Natural killer cell (primary cell): ENCODE measurements at regions of chr1 and their contacts with region 1.

Region 1: DNA sequence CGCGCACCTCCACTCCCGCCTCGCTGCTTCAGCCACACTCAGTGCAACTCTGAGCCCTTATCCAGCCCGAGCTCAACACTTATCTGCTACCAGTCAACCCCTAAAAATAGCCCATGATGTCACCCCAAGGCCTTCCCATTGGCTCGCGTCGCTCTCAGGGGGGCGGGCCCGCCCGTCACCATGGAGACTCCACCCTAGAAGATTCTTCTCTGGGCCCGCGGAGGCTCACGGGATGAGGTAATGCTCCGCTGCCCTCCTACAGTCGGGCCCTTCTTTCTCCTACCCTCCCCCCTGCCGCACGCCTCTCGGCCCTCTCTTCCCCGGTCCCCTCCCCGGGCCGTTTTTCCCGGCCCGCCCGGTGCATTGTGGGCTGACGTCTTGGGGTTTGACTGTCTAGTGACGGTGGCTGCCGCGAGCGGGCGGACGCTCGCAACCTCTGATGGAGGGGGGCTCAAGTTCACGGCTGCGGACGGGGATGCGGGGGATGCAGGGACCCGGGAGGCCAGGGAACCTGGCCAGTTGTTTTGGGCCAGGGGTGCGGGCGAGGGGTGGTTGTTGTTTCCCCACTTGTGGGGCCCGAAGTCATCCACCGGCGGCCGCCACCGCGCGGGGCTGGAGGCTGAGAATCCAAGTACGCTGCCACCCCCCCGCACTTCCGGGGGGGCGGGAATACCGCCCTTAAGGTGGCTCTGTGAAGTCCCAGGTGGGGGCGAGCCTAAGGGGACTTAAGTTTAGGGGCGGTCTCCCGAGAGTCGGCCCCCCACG is at the start of gene JUN:
- DNase-seq: peak; percentile 98 to 99
- ATAC-seq: peak; percentile 66 to 86 (median 69)
- H3K4me3 ChIP-seq: peak within 1 kb of the TSS; percentile 97
- H3K4me3 Mint-ChIP-seq: peak within 1 kb of the TSS; percentile 92
- H3K27ac ChIP-seq: peak within 1 kb of the TSS; percentile 98
- H3K27ac Mint-ChIP-seq: peak within 1 kb of the TSS; percentile 96 to 99
- H3K4me1 ChIP-seq: peaks cover 25% of the 10 kb centered on the region
- H3K4me1 Mint-ChIP-seq: peaks cover 47 to 61% of the 10 kb centered on the region in 2 donors
- H3K27me3 ChIP-seq: no peaks in the 10 kb centered on the region
- H3K27me3 Mint-ChIP-seq: peaks cover 0 to 9% of the 10 kb centered on the region in 2 donors
- CTCF ChIP-seq: no peak
- total RNA-seq, gene JUN: 1,209 to 1,942 (median 1,808) TPM

Region 2: DNA sequence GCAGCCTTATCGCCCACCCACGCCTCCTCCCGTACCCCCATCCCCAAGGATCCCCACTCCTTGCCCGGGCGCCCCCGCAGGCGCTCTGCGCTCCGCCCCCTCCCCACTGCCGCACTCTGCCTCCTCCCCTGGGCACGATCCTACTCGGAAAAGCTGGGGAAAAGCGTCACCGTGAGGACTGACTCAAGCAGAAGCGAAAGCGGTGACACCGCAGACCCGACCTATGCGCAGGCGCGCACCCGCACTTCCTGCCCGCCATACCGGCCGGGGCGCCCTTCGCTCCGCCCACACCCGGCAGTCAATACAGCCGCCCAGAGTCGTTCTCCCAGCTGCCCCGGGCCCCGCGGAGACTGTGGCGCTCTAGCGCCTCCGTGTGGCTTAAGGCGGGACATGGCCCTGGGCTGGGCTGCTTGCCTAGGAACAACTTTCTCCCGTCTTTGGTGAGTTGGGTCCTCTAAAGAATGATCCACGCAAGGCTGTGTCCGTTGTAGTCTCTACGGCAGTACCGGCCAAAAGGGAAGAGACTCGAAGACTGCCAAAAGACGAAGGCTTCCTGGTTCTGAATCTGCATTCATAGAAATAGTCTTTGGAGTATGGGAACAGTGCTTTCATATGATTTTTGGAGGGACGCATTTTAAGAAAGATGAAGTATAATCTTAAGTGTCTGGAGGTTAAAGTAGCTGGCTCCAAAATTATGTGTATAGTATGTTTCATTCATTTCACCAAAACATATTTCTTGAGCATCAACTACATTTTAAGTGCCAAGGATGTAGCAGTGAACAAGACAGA is 237.5 kb before region 1 on chr1 and contains the start of gene OMA1:
- intact Hi-C with region 1: loop called (anchors 2 kb)
- DNase-seq: peak; percentile 98 to 99
- ATAC-seq: peak; percentile 91 to 99 (median 92)
- H3K4me3 ChIP-seq: peak within 1 kb of the TSS; percentile 53
- H3K4me3 Mint-ChIP-seq: peak within 1 kb of the TSS; percentile 94
- H3K27ac ChIP-seq: peak within 1 kb of the TSS; percentile 99
- H3K27ac Mint-ChIP-seq: peak within 1 kb of the TSS; percentile 93 to 98
- H3K4me1 ChIP-seq: peaks cover 10% of the 10 kb centered on the region
- H3K4me1 Mint-ChIP-seq: peaks cover 19 to 34% of the 10 kb centered on the region in 2 donors
- H3K27me3 ChIP-seq: no peaks in the 10 kb centered on the region
- H3K27me3 Mint-ChIP-seq: peaks cover 5 to 17% of the 10 kb centered on the region in 2 donors
- CTCF ChIP-seq: peak; percentile 88
- total RNA-seq, gene OMA1: 27.2 to 41.1 (median 31.2) TPM

Region 3: DNA sequence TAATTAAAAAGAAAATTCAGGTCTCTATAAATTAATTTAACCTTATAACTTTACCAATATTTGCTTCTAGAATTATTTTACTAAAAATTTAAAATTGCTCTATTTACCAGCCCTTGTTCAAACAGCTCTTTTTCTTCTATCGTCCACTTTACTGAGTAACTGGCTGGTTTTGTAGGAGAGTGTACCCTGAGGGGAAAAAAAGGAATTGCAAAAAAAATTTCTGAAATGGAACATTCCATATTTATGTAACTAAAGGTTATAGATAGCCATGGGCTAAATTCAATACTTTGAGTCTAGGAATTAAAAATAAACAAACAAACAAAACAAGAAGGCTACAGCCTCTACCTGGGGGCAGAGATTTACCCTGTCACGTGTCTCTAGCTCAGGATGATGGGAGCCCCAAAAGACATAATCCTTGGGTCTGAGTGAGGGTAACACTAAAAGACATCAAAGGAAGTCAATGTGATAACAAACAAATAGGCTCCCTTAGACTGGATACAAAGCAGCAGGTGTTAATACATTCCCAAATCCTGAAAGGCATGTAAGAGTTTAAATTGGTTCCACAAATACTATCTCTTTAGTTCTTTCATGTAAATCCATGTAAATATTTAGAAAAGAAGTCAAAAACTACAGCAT is 95.1 kb before region 1 on chr1:
- intact Hi-C with region 1: no loop called
- DNase-seq: no peak
- ATAC-seq: no peak
- H3K4me3 ChIP-seq: no peak overlapping the region
- H3K4me3 Mint-ChIP-seq: no peak overlapping the region
- H3K27ac ChIP-seq: no peak overlapping the region
- H3K27ac Mint-ChIP-seq: no peak overlapping the region
- H3K4me1 ChIP-seq: no peaks in the 10 kb centered on the region
- H3K4me1 Mint-ChIP-seq: peaks cover 11% of the 10 kb centered on the region in 2 donors
- H3K27me3 ChIP-seq: no peaks in the 10 kb centered on the region
- H3K27me3 Mint-ChIP-seq: no peaks in the 10 kb centered on the region
- CTCF ChIP-seq: no peak

Region 4: DNA sequence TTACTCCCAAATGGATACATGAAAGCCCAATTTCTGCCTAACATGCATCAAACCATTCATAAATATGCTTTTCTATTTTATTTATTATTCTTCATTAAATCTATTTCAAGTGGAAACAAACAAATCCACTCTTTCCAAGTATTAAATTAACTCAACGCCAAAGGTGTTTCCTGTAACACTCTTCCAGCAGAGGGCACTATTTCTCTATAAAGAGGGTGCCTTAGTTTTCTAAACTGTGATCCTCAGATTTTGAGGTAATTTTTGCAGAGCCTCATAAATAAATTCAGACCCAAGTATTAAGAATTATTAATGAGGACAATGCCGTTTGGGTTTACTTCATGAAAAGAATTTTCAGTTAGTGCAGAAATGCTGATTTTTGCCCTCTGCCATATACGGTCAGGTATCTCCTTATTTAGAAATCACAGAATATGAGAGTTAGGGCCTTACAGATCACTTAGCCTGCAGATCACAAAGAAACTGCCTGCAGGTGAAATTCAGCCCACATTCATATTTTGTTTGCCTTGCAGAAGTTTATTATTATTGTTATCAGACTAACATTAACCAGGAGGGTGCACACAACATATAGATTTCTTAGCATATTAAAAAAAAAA is 44.2 kb before region 1 on chr1:
- intact Hi-C with region 1: no loop called
- DNase-seq: peak in 1 of 2 donors; percentile 81
- ATAC-seq: peak; percentile 57 to 69 (median 58)
- H3K4me3 ChIP-seq: no peak overlapping the region
- H3K4me3 Mint-ChIP-seq: no peak overlapping the region
- H3K27ac ChIP-seq: no peak overlapping the region
- H3K27ac Mint-ChIP-seq: no peak overlapping the region
- H3K4me1 ChIP-seq: no peaks in the 10 kb centered on the region
- H3K4me1 Mint-ChIP-seq: peaks cover 9 to 25% of the 10 kb centered on the region in 2 donors
- H3K27me3 ChIP-seq: no peaks in the 10 kb centered on the region
- H3K27me3 Mint-ChIP-seq: no peaks in the 10 kb centered on the region
- CTCF ChIP-seq: peak; percentile 94

Region 5: DNA sequence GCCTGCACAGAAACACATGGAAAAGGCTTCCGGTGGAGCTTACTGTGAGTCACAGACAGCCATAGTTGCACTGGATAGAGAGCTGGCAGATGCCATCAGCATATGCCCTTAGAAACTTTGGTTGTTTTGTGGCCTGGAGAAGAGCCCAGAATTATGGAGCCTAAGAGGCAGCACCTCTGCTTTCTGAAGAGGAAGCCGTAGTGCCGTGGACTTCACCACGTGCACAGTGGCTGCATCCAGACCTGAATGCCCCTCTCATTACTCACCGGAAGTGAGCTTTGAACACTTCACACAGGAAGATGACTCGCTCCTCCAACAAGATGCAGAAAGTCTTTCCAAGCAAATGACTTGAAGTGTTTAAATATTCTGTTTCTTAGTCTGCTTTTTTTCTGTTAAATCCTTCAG is 28.7 kb before region 1 on chr1:
- intact Hi-C with region 1: loop called (anchors 1 kb)
- DNase-seq: peak; percentile 57 to 73
- ATAC-seq: peak; percentile 84 to 88 (median 84)
- H3K4me3 ChIP-seq: no peak overlapping the region
- H3K4me3 Mint-ChIP-seq: peak overlapping the region; percentile 85
- H3K27ac ChIP-seq: peak overlapping the region; percentile 56
- H3K27ac Mint-ChIP-seq: peak overlapping the region; percentile 89 to 92
- H3K4me1 ChIP-seq: peaks cover 45% of the 10 kb centered on the region
- H3K4me1 Mint-ChIP-seq: peaks cover 82 to 87% of the 10 kb centered on the region in 2 donors
- H3K27me3 ChIP-seq: no peaks in the 10 kb centered on the region
- H3K27me3 Mint-ChIP-seq: no peaks in the 10 kb centered on the region
- CTCF ChIP-seq: no peak

Region 6: GRCh38 chr1:58883037-58883887 is 99.1 kb after region 1 on chr1:
- intact Hi-C with region 1: loop called (anchors 10 kb)
- DNase-seq: peak in 1 of 2 donors; percentile 21
- ATAC-seq: peak in 2 of 3 donors; percentile 21 to 69
- H3K4me3 ChIP-seq: no peak overlapping the region
- H3K4me3 Mint-ChIP-seq: no peak overlapping the region
- H3K27ac ChIP-seq: peak overlapping the region; percentile 20
- H3K27ac Mint-ChIP-seq: peak overlapping the region in 1 of 2 donors; percentile 5
- H3K4me1 ChIP-seq: peaks cover 43% of the 10 kb centered on the region
- H3K4me1 Mint-ChIP-seq: peaks cover 51 to 88% of the 10 kb centered on the region in 2 donors
- H3K27me3 ChIP-seq: no peaks in the 10 kb centered on the region
- H3K27me3 Mint-ChIP-seq: no peaks in the 10 kb centered on the region
- CTCF ChIP-seq: no peak

Region 7: DNA sequence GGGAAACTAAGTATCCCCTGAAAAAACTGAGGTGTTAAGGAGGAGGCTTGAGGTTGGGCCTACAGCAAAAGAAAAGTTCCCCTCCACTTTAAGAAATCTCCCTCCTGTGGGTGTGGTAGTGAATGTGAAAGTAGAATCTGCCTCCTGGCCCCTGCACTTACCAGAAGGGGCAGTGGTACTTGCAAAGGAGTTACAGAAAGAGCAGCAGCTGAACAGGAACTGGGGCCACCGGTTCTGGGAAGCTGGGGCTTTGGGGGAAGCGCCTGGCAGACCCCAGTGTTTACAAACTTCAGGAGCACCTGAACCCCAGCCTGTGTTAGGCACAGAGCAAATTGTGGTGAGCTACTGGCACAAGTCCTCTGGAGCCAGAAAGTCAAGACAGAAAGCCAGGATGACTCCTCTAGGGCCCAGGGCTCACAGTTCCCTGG is 262.6 kb after region 1 on chr1:
- intact Hi-C with region 1: loop called (anchors 10 kb)
- DNase-seq: peak in 1 of 2 donors; percentile 73
- ATAC-seq: peak; percentile 81 to 89 (median 85)
- H3K4me3 ChIP-seq: no peak overlapping the region
- H3K4me3 Mint-ChIP-seq: peak overlapping the region; percentile 51
- H3K27ac ChIP-seq: peak overlapping the region; percentile 71
- H3K27ac Mint-ChIP-seq: peak overlapping the region; percentile 80 to 84
- H3K4me1 ChIP-seq: peaks cover 42% of the 10 kb centered on the region
- H3K4me1 Mint-ChIP-seq: peaks cover 37 to 40% of the 10 kb centered on the region in 2 donors
- H3K27me3 ChIP-seq: no peaks in the 10 kb centered on the region
- H3K27me3 Mint-ChIP-seq: peaks cover 0 to 4% of the 10 kb centered on the region in 2 donors
- CTCF ChIP-seq: peak; percentile 25

Region 8: GRCh38 chr1:59296358-59297256 is 512.4 kb after region 1 on chr1 and contains the start of gene FGGY:
- intact Hi-C with region 1: loop called (anchors 1 kb)
- DNase-seq: peak; percentile 87 to 93
- ATAC-seq: peak; percentile 85 to 95 (median 89)
- H3K4me3 ChIP-seq: peak within 1 kb of the TSS; percentile 69
- H3K4me3 Mint-ChIP-seq: peak within 1 kb of the TSS; percentile 88
- H3K27ac ChIP-seq: peak within 1 kb of the TSS; percentile 96
- H3K27ac Mint-ChIP-seq: peak within 1 kb of the TSS; percentile 94 to 95
- H3K4me1 ChIP-seq: peaks cover 43% of the 10 kb centered on the region
- H3K4me1 Mint-ChIP-seq: peaks cover 48 to 50% of the 10 kb centered on the region in 2 donors
- H3K27me3 ChIP-seq: no peaks in the 10 kb centered on the region
- H3K27me3 Mint-ChIP-seq: no peaks in the 10 kb centered on the region
- CTCF ChIP-seq: no peak
- total RNA-seq, gene FGGY: 21.8 to 31.5 (median 21.8) TPM